Left ventricle myocardium inferior (tissue), 1 donor: ENCODE measurements at regions of chr17 and their contacts with region 1.

Region 1: DNA sequence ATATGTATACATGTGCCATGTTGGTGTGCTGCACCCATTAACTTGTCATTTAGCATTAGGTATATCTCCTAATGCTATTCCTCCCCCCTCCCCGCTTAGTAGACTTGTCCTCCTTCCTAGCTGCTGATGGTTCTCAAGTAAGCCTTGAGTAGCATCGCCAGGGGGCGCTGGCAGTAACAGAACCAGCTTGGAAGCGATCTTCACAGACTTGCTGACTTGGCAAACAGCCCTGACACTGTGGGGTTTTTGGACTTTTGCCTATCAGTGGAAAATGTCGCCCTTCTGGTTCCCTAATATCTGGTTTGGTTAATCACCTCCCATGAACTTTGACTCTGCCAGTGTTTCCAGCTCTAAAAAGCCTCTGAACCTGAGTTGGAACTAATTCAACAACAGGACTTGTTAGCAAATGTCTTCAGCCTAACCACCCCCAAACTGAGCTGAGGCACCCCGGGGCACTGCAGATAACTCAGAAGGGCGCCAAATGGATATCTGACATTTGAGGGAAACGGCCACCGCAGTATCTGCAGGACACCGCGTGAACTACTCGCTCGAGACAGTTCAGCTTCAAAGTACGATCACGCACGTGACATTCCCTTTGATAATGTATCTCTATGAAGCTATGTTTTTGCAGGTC is 15.4 kb upstream of the SPATA32 start:
- DNase-seq: peak; percentile 94
- H3K4me3 ChIP-seq: peak overlapping the region; percentile 33
- H3K27ac ChIP-seq: peak overlapping the region; percentile 97
- H3K4me1 ChIP-seq: peaks cover 65% of the 10 kb centered on the region
- H3K27me3 ChIP-seq: no peaks in the 10 kb centered on the region
- CTCF ChIP-seq: peak; percentile 84

Region 2: GRCh38 chr17:45311760-45312476 is 34.6 kb after region 1 on chr17:
- intact Hi-C with region 1: loop called (anchors 5 kb)
- DNase-seq: peak; percentile 63
- H3K4me3 ChIP-seq: peak overlapping the region; percentile 90
- H3K27ac ChIP-seq: peak overlapping the region; percentile 97
- H3K4me1 ChIP-seq: peaks cover 99% of the 10 kb centered on the region
- H3K27me3 ChIP-seq: no peaks in the 10 kb centered on the region
- CTCF ChIP-seq: no peak

Region 3: GRCh38 chr17:45385331-45385997 is 108.1 kb after region 1 on chr17:
- intact Hi-C with region 1: loop called (anchors 2 kb)
- DNase-seq: peak; percentile 88
- H3K4me3 ChIP-seq: no peak overlapping the region
- H3K27ac ChIP-seq: peak overlapping the region; percentile 58
- H3K4me1 ChIP-seq: peaks cover 38% of the 10 kb centered on the region
- H3K27me3 ChIP-seq: peaks cover 7% of the 10 kb centered on the region
- CTCF ChIP-seq: peak; percentile 99